Esophagus squamous epithelium (tissue), 5 donors: ENCODE measurements at regions of chr11 and their contacts with region 1.

Region 1: GRCh38 chr11:88435189-88435814 is 97.8 kb upstream of the CTSC start:
- DNase-seq: no peak
- H3K4me3 ChIP-seq: no peak overlapping the region
- H3K27ac ChIP-seq: peak overlapping the region in 2 of 4 donors; percentile 9 to 18
- H3K4me1 ChIP-seq: peaks cover 3 to 58% (median 27%) of the 10 kb centered on the region in 3 donors
- H3K27me3 ChIP-seq: no peaks in the 10 kb centered on the region
- CTCF ChIP-seq: no peak
- POLR2A ChIP-seq: no peak

Region 2: DNA sequence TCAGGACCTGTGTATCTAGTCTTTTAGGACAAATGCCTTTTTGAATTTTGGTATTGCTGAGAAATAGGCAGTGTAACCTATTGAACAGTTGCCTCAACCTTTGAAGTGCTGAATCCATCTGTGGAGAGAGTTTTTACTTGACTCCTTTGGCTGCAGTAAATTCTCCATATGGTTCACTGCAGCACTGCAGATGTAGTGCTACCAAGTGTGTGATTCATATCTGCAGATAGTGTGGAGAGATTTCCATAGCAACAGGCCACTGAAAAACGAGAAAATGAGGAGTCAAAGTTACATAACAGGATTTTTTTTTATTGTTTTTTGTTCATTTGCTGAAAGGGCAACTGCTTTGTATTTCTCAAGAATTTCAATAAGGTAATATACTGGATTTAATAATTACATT is 616.2 kb before region 1 on chr11:
- intact Hi-C with region 1: no loop called
- DNase-seq: no peak
- H3K4me3 ChIP-seq: no peak overlapping the region
- H3K27ac ChIP-seq: no peak overlapping the region
- H3K4me1 ChIP-seq: no peaks in the 10 kb centered on the region
- H3K27me3 ChIP-seq: no peaks in the 10 kb centered on the region
- CTCF ChIP-seq: no peak
- POLR2A ChIP-seq: no peak

Region 3: DNA sequence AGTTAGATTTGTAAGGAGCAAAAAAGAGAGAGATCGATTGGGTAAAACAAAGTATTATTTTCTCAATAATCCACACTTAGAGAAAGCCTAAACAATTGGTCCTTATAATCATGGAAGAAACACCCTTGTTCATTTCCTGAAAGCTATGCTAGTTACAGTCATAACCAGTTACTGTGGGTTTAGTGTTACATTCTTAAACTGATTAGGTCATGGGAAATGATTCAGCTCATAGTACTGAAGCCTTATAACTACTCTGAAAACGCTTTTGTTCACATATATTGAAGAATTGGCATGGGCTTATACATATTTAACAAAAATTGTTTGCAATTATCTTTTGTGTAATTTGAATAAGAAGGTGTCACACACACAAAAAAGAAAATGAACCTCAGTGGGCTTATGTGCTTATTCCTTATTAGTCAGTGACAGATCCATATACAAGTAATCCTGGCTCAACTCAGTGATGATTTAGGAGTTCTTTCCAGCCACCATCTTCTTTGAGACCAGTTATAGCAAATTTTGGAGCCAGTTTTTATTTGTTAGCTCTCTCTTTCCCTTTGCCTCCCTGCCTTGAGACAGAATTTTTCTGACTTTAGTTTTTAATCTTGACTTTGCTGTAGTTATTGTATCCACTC is 100.7 kb after region 1 on chr11:
- intact Hi-C with region 1: loop called (anchors 10 kb)
- DNase-seq: no peak
- H3K4me3 ChIP-seq: no peak overlapping the region
- H3K27ac ChIP-seq: peak overlapping the region in 2 of 4 donors; percentile 0 to 47
- H3K4me1 ChIP-seq: peaks cover 0 to 25% (median 16%) of the 10 kb centered on the region in 3 donors
- H3K27me3 ChIP-seq: no peaks in the 10 kb centered on the region
- CTCF ChIP-seq: no peak
- POLR2A ChIP-seq: no peak

Region 4: GRCh38 chr11:88644724-88645123 is 209.4 kb after region 1 on chr11:
- intact Hi-C with region 1: no loop called
- DNase-seq: no peak
- H3K4me3 ChIP-seq: no peak overlapping the region
- H3K27ac ChIP-seq: no peak overlapping the region
- H3K4me1 ChIP-seq: no peaks in the 10 kb centered on the region
- H3K27me3 ChIP-seq: no peaks in the 10 kb centered on the region
- CTCF ChIP-seq: no peak
- POLR2A ChIP-seq: no peak

Region 5: GRCh38 chr11:88709567-88709966 is 274.3 kb after region 1 on chr11:
- intact Hi-C with region 1: no loop called
- DNase-seq: no peak
- H3K4me3 ChIP-seq: no peak overlapping the region
- H3K27ac ChIP-seq: no peak overlapping the region
- H3K4me1 ChIP-seq: peaks cover 0 to 11% (median 0%) of the 10 kb centered on the region in 3 donors
- H3K27me3 ChIP-seq: no peaks in the 10 kb centered on the region
- CTCF ChIP-seq: no peak
- POLR2A ChIP-seq: no peak